ENCODE measurements at regions of chr2 and their contacts with region 1.

Region 1: DNA sequence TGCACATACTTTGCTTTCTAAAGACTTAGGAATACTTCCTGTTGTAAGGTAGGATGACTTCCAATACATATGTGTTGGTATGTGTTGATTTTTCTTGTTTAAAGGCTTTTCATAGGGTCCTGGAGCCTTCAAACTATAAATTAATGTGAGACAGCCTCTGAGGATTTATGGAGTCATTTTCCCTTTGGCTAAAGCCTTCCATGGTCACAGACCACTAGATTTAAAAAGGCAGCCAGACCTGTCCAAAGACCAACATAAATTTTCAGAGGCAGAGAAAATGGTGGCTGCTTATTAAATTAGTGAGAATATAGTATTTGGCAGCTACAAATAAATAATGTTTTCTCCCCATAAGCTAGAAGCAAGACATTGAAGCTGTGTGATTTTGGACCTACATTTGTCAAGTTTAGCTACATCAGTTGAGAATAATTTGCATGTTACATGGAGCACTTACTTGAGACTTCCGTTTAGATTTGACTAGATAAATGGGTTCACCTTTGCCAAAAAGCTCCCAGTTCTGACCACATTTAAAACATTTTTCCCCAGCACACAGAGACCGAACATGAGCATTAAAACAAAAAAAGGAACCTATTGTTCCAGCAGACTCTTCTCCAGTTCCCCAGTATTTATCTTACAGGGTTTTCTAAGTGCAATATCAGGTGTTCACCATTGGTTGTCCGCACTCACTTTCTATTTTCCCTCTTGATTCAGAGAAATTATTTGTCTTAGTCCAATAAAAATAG is 402.9 kb downstream of the PARD3B start:
- DNase-seq: no peak
- ATAC-seq: peak; percentile 72
- H3K4me3 Mint-ChIP-seq: no peak overlapping the region
- H3K27ac Mint-ChIP-seq: peak overlapping the region; percentile 71
- H3K4me1 Mint-ChIP-seq: peaks cover 42% of the 10 kb centered on the region
- H3K27me3 Mint-ChIP-seq: no peaks in the 10 kb centered on the region

Region 2: GRCh38 chr2:204971206-204971907 is 23.2 kb after region 1 on chr2:
- CTCF ChIA-PET with region 1: interaction called, 5 read pairs
- POLR2A ChIA-PET with region 1: no interaction called
- intact Hi-C with region 1: loop called in 1 of 2 experiments (anchors 2 kb)
- DNase-seq: no peak
- ATAC-seq: peak; percentile 57
- H3K4me3 Mint-ChIP-seq: no peak overlapping the region
- H3K27ac Mint-ChIP-seq: peak overlapping the region; percentile 75
- H3K4me1 Mint-ChIP-seq: peaks cover 53% of the 10 kb centered on the region
- H3K27me3 Mint-ChIP-seq: no peaks in the 10 kb centered on the region

Measured in activated CD4-positive, alpha-beta T cell treated with anti-CD3 and anti-CD28 coated beads for 36 hours (primary cell).